CD4-positive, alpha-beta T cell (primary cell): ENCODE measurements at regions of chr12 and their contacts with region 1.

Region 1: DNA sequence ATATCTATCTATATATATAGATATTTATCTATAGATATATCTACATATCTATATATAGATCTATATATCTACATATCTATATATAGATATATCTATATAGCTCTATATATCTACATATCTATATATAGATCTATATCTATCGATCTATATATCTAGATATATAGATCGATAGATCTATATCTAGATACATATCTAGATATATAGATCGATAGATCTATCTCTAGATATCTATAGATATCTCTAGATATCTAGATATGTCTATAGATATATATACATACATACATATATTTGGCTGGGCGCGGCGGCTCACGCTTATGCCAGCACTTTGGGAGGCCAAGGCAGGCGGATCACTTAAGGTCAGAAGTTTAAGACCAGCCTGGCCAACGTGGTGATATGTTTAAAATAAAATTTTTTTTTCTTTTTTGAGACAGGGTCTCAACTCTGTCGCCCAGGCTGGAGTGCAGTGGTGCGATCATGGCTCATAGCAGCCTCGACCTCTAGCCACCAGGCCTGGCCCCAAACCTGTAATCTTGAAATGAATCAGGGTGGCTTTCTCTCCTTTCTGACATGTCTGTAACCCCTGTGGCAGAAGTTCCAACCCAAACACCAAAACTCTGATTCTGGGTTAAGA is 18.1 kb downstream of the ARPC3 start:
- DNase-seq: no peak
- ATAC-seq: no peak
- H3K4me3 ChIP-seq: peak overlapping the region; percentile 55
- H3K4me3 Mint-ChIP-seq: no peak overlapping the region
- H3K27ac ChIP-seq: no peak overlapping the region
- H3K27ac Mint-ChIP-seq: peak overlapping the region; percentile 96
- H3K4me1 ChIP-seq: peaks cover 2% of the 10 kb centered on the region
- H3K4me1 Mint-ChIP-seq: peaks cover 6% of the 10 kb centered on the region
- H3K27me3 ChIP-seq: no peaks in the 10 kb centered on the region
- H3K27me3 Mint-ChIP-seq: no peaks in the 10 kb centered on the region
- CTCF ChIP-seq: no peak

Region 2: DNA sequence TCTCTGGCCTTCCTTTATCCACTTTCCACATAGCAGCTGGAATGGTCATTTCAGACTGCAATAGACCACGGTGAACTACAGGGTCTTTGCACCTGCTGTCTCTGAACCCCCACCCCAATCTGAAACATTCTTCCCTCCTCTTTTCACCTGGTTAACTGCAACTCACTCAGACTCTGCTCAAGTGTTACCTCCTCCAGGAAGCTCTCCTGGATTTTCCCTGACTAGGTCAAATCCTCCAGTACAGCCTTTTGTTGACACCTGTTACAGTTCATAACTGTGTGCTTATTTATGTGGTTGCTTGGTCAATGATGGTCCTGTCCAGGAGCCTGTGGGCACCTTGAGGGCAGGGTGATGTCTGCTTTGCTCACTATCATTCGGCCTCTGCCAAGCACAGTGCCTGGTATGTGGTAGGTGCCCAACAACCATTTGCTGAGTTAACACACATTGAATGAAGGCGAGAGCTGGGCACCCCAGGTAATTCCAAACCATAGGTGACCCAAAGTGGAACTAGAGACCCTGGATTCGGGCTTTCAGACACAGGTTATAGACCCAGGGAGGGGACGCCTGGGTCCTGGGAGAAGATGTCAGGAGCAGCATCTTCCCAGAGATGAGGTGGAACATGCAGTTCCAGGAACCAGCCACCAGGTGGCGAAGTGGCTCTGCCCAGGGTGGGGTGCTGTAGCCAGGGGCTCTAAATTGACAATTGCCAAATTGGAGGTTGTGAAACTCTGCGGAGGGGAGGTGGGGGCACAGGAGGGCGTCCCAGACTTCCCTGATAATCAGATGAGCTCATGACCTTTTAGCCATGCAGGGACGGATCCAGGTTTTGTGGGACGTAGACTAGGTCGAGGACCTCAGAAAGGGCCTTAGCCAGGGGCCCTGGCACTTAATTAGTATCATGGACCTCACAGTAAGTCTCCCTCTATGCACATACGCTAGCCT is 627.0 kb before region 1 on chr12:
- CTCF ChIA-PET with region 1: no interaction called
- POLR2A ChIA-PET with region 1: no interaction called
- intact Hi-C with region 1: no loop called
- DNase-seq: peak; percentile 53 to 81 (median 62)
- ATAC-seq: peak; percentile 82
- H3K4me3 ChIP-seq: no peak overlapping the region
- H3K4me3 Mint-ChIP-seq: no peak overlapping the region
- H3K27ac ChIP-seq: no peak overlapping the region
- H3K27ac Mint-ChIP-seq: no peak overlapping the region
- H3K4me1 ChIP-seq: peaks cover 6% of the 10 kb centered on the region
- H3K4me1 Mint-ChIP-seq: no peaks in the 10 kb centered on the region
- H3K27me3 ChIP-seq: no peaks in the 10 kb centered on the region
- H3K27me3 Mint-ChIP-seq: peaks cover 5% of the 10 kb centered on the region
- CTCF ChIP-seq: peak; percentile 97

Region 3: GRCh38 chr12:110079477-110080400 is 352.3 kb before region 1 on chr12:
- CTCF ChIA-PET with region 1: no interaction called
- POLR2A ChIA-PET with region 1: interaction called, 10 read pairs
- intact Hi-C with region 1: no loop called
- DNase-seq: peak; percentile 50 to 89 (median 67)
- ATAC-seq: peak; percentile 94
- H3K4me3 ChIP-seq: peak overlapping the region; percentile 41
- H3K4me3 Mint-ChIP-seq: peak overlapping the region; percentile 84
- H3K27ac ChIP-seq: peak overlapping the region; percentile 75 to 84
- H3K27ac Mint-ChIP-seq: peak overlapping the region; percentile 95
- H3K4me1 ChIP-seq: peaks cover 24% of the 10 kb centered on the region
- H3K4me1 Mint-ChIP-seq: peaks cover 18% of the 10 kb centered on the region
- H3K27me3 ChIP-seq: no peaks in the 10 kb centered on the region
- H3K27me3 Mint-ChIP-seq: no peaks in the 10 kb centered on the region
- CTCF ChIP-seq: no peak

Region 4: GRCh38 chr12:110100315-110100970 is 331.6 kb before region 1 on chr12:
- CTCF ChIA-PET with region 1: interaction called, 10 read pairs
- POLR2A ChIA-PET with region 1: interaction called, 5 read pairs
- intact Hi-C with region 1: loop called (anchors 1 kb)
- DNase-seq: peak; percentile 32 to 84 (median 46)
- ATAC-seq: peak; percentile 80
- H3K4me3 ChIP-seq: no peak overlapping the region
- H3K4me3 Mint-ChIP-seq: no peak overlapping the region
- H3K27ac ChIP-seq: no peak overlapping the region
- H3K27ac Mint-ChIP-seq: no peak overlapping the region
- H3K4me1 ChIP-seq: no peaks in the 10 kb centered on the region
- H3K4me1 Mint-ChIP-seq: peaks cover 13% of the 10 kb centered on the region
- H3K27me3 ChIP-seq: no peaks in the 10 kb centered on the region
- H3K27me3 Mint-ChIP-seq: no peaks in the 10 kb centered on the region
- CTCF ChIP-seq: peak; percentile 99

Region 5: GRCh38 chr12:110349531-110350151 is 82.4 kb before region 1 on chr12:
- CTCF ChIA-PET with region 1: interaction called, 12 read pairs
- POLR2A ChIA-PET with region 1: interaction called, 3 read pairs
- intact Hi-C with region 1: loop called in 1 of 2 experiments (anchors 5 kb)
- DNase-seq: peak in 13 of 14 experiments; percentile 5 to 73 (median 33)
- ATAC-seq: peak; percentile 89
- H3K4me3 ChIP-seq: no peak overlapping the region
- H3K4me3 Mint-ChIP-seq: peak overlapping the region; percentile 65
- H3K27ac ChIP-seq: peak overlapping the region; percentile 54 to 64
- H3K27ac Mint-ChIP-seq: peak overlapping the region; percentile 68
- H3K4me1 ChIP-seq: peaks cover 16% of the 10 kb centered on the region
- H3K4me1 Mint-ChIP-seq: peaks cover 44% of the 10 kb centered on the region
- H3K27me3 ChIP-seq: no peaks in the 10 kb centered on the region
- H3K27me3 Mint-ChIP-seq: no peaks in the 10 kb centered on the region
- CTCF ChIP-seq: no peak

Region 6: DNA sequence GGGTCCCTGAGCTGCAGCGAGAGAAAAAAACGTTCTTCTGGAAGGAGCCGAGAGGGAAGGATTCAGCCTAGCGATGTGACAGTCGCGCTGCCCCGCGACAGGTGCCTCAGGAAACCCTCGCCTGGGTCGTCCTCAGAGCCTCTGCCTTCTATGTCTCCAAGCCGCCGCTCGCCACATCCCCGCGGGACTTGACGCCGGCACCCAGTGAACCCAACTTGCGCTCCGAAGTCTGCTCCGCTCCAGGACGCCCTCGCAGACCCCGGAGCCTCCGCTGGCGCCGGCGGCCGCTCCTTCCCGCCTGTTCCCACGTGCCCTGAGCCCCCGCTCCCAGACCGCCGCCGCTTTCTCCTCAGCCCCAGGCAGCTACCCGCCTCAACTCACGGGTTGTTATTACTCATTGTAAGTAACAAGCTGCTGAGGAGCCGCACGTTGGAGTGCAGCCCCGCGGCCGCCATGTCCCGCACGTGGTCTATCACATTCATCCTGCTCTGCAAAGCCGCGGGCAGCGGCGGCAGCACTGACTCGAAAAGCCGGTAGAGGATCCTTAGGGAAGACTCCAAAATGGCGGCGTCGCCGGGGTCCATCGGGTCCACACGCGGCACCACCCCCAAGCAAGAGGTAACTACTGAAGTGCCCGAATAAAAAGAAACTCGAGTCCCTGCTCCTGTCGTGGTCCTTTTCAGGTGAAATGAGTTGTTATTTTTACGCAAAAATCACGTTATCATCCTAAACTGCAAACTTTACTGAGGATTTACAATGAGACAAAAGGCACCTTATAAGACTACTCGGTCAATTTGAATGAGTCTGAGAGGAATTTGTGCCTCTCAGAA is 28.7 kb before region 1 on chr12 and contains the start of gene ANAPC7:
- CTCF ChIA-PET with region 1: interaction called, 13 read pairs
- POLR2A ChIA-PET with region 1: interaction called, 7 read pairs
- intact Hi-C with region 1: loop called in 1 of 2 experiments (anchors 1 kb)
- DNase-seq: peak; percentile 73 to 94 (median 84)
- ATAC-seq: peak; percentile 94
- H3K4me3 ChIP-seq: peak within 1 kb of the TSS; percentile 79
- H3K4me3 Mint-ChIP-seq: peak within 1 kb of the TSS; percentile 99
- H3K27ac ChIP-seq: peak within 1 kb of the TSS; percentile 86 to 91
- H3K27ac Mint-ChIP-seq: peak within 1 kb of the TSS; percentile 98
- H3K4me1 ChIP-seq: peaks cover 26% of the 10 kb centered on the region
- H3K4me1 Mint-ChIP-seq: peaks cover 41% of the 10 kb centered on the region
- H3K27me3 ChIP-seq: no peaks in the 10 kb centered on the region
- H3K27me3 Mint-ChIP-seq: no peaks in the 10 kb centered on the region
- CTCF ChIP-seq: no peak
- total RNA-seq, gene ANAPC7: 16.4 to 18.2 TPM

Region 7: GRCh38 chr12:110421159-110421661 is 10.9 kb before region 1 on chr12:
- CTCF ChIA-PET with region 1: interaction called, 19 read pairs
- POLR2A ChIA-PET with region 1: interaction called, 3 read pairs
- intact Hi-C with region 1: no loop called
- DNase-seq: no peak
- ATAC-seq: no peak
- H3K4me3 ChIP-seq: no peak overlapping the region
- H3K4me3 Mint-ChIP-seq: no peak overlapping the region
- H3K27ac ChIP-seq: no peak overlapping the region
- H3K27ac Mint-ChIP-seq: no peak overlapping the region
- H3K4me1 ChIP-seq: no peaks in the 10 kb centered on the region
- H3K4me1 Mint-ChIP-seq: no peaks in the 10 kb centered on the region
- H3K27me3 ChIP-seq: no peaks in the 10 kb centered on the region
- H3K27me3 Mint-ChIP-seq: peaks cover 4% of the 10 kb centered on the region
- CTCF ChIP-seq: no peak